PC-9 (cell line): ENCODE measurements at regions of chr2 and their contacts with region 1.

Region 1: DNA sequence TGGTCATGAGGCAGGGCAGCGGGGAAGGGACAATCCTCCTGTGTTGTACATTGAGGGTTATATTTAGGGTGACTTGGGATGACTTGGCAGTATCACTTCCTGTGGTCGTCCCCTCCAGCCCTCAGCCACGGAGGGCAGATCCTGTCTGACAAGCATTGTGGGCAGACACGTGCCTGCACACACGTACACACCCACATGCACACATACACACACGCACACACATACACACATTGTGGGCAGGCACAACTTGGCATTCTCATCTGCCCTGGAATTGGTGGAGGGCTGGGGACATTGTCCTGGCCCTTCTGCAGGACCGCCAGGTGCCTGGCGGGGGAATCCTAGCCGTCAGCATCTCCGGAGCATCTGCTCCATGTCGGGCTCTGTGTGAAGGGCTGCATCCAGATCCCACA is 47.6 kb downstream of the ODC1 start:
- DNase-seq: peak in 1 of 2 experiments; percentile 30
- H3K4me3 ChIP-seq: no peak overlapping the region
- H3K27ac ChIP-seq: 0 out of 2 replicates have a peak overlapping the region, but pooled peaks have one; percentile 36
- H3K4me1 ChIP-seq: peaks cover 49% of the 10 kb centered on the region
- H3K27me3 ChIP-seq: no peaks in the 10 kb centered on the region
- CTCF ChIP-seq: no peak

Region 2: DNA sequence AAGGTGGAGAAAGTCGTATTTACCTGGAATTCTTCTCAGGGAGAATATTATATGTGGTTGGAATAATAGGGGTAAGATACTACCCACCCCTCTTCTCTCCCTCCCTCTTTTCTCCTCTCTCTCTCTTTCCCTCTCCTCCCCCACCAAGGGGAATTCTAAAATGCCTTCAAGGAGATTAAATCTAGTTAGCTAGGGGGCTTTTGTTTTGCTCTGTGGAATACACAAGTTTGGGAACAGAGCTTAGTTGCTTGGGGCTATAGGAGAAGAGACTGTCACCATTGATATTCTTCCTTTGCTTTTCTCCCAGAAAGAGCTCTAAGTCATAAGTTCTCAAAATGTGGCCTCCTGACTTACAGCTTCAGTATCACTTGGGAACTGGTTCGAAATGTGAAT is 522.8 kb before region 1 on chr2:
- CTCF ChIA-PET with region 1: interaction called, 10 read pairs
- POLR2A ChIA-PET with region 1: no interaction called
- intact Hi-C with region 1: no loop called
- DNase-seq: no peak
- H3K4me3 ChIP-seq: no peak overlapping the region
- H3K27ac ChIP-seq: no peak overlapping the region
- H3K4me1 ChIP-seq: no peaks in the 10 kb centered on the region
- H3K27me3 ChIP-seq: no peaks in the 10 kb centered on the region
- CTCF ChIP-seq: no peak

Region 3: GRCh38 chr2:10341193-10341592 is 59.4 kb before region 1 on chr2:
- CTCF ChIA-PET with region 1: no interaction called
- POLR2A ChIA-PET with region 1: no interaction called
- intact Hi-C with region 1: loop called (anchors 1 kb)
- DNase-seq: no peak
- H3K4me3 ChIP-seq: no peak overlapping the region
- H3K27ac ChIP-seq: no peak overlapping the region
- H3K4me1 ChIP-seq: peaks cover 13% of the 10 kb centered on the region; the same call in 1 of the 2 replicates
- H3K27me3 ChIP-seq: no peaks in the 10 kb centered on the region
- CTCF ChIP-seq: no peak

Region 4: GRCh38 chr2:10448208-10448645 is 47.7 kb after region 1 on chr2 and contains the start of gene ODC1:
- CTCF ChIA-PET with region 1: no interaction called
- POLR2A ChIA-PET with region 1: no interaction called
- intact Hi-C with region 1: no loop called
- DNase-seq: peak; percentile 75 to 93
- H3K4me3 ChIP-seq: peak within 1 kb of the TSS; percentile 75
- H3K27ac ChIP-seq: peak within 1 kb of the TSS; percentile 7
- H3K4me1 ChIP-seq: peaks cover 55% of the 10 kb centered on the region
- H3K27me3 ChIP-seq: no peaks in the 10 kb centered on the region
- CTCF ChIP-seq: no peak
- total RNA-seq, gene ODC1: 39.9 and 40.5 TPM in 2 replicates